ENCODE measurements at regions of chr4 and their contacts with region 1.

Region 1: DNA sequence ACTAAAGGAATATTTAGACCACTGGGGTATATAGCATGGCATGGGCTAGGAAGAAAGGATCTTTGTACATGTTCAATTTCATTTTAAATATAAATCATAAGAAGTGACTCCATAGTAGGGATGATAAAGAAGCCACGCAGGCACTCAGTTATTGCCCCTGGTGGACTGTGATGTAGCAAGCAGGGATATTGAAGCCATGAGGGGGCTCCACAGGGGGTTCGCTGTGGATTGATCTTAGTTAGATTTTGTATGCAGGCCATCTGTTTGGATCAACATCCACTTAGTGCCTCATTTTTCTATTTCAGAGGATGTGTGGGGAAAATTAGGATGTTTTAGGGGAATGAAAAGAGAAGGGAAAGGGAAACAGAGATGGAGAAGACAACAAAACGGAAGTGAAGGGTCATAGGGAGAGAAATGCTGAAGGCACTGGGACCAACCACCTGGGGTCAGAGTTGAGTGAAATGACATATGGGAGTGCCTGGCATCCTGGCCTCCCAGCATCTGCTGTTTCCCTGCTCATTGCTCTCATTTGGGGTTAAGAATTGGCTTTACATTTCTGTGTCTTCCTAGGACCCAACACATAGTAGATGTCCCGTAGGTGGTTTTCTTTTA is 11.2 kb upstream of the FREM3 start:
- DNase-seq: no peak
- H3K4me3 ChIP-seq: no peak overlapping the region
- H3K27ac ChIP-seq: no peak overlapping the region
- H3K4me1 ChIP-seq: no peaks in the 10 kb centered on the region
- H3K27me3 ChIP-seq: no peaks in the 10 kb centered on the region
- CTCF ChIP-seq: no peak

Region 2: DNA sequence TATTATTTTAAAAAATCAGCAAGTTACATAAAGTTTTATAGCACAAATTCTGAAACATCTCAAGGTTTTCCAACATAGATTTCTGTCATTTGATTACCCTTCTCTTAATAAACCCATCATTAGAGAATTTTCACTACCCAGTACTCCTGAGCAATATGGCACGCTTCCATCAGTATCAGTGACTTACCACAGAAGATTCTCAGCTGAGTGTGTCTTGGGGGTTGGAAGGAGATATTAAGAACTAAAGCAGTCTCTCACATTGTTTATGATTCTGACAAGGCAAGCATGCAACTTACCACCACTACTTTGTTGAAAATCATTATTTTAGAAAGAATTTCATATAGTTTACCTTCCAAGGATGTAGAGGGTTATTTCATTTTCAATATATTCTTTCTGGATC is 933.2 kb before region 1 on chr4:
- CTCF ChIA-PET with region 1: no interaction called
- dilution Hi-C with region 1: no loop called
- in situ Hi-C with region 1: no loop called
- intact Hi-C with region 1: no loop called
- DNase-seq: peak; percentile 29
- H3K4me3 ChIP-seq: no peak overlapping the region
- H3K27ac ChIP-seq: no peak overlapping the region
- H3K4me1 ChIP-seq: peaks cover 6% of the 10 kb centered on the region
- H3K27me3 ChIP-seq: no peaks in the 10 kb centered on the region
- CTCF ChIP-seq: no peak

Region 3: GRCh38 chr4:143658336-143658735 is 53.3 kb before region 1 on chr4:
- CTCF ChIA-PET with region 1: no interaction called
- dilution Hi-C with region 1: loop called (anchors 5 kb)
- in situ Hi-C with region 1: no loop called
- intact Hi-C with region 1: no loop called
- DNase-seq: no peak
- H3K4me3 ChIP-seq: no peak overlapping the region
- H3K27ac ChIP-seq: no peak overlapping the region
- H3K4me1 ChIP-seq: no peaks in the 10 kb centered on the region
- H3K27me3 ChIP-seq: no peaks in the 10 kb centered on the region
- CTCF ChIP-seq: no peak

Region 4: DNA sequence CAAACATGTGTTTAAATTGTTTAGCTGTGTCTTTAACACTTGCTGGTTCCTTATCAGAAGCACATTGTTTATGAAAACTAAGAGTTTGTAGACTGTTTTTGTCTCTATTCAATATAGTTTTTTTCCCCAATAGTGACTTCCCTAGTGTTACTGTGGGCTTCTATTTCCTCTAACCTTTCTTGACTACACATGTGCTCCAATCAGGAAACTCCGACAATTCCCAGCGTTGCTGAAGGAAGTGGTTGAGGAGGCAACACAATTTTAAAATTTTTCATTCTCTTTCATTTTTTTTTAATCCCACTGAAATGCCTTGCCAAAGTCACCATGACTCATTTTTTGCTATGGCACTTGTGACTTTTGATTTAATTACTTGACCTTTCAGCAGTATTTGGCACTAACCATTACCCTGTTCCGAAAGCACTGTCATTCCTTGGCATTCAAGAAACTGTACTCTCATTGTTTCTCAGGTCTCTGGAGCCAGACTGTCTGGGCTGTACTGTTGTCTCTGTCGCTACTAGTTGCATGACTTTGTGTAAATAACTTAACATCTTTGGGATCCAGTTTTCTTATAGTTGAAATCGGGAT is 56.5 kb after region 1 on chr4:
- CTCF ChIA-PET with region 1: no interaction called
- dilution Hi-C with region 1: no loop called
- in situ Hi-C with region 1: no loop called
- intact Hi-C with region 1: no loop called
- DNase-seq: peak; percentile 2
- H3K4me3 ChIP-seq: no peak overlapping the region
- H3K27ac ChIP-seq: no peak overlapping the region
- H3K4me1 ChIP-seq: no peaks in the 10 kb centered on the region
- H3K27me3 ChIP-seq: peaks cover 6% of the 10 kb centered on the region
- CTCF ChIP-seq: no peak

Region 5: DNA sequence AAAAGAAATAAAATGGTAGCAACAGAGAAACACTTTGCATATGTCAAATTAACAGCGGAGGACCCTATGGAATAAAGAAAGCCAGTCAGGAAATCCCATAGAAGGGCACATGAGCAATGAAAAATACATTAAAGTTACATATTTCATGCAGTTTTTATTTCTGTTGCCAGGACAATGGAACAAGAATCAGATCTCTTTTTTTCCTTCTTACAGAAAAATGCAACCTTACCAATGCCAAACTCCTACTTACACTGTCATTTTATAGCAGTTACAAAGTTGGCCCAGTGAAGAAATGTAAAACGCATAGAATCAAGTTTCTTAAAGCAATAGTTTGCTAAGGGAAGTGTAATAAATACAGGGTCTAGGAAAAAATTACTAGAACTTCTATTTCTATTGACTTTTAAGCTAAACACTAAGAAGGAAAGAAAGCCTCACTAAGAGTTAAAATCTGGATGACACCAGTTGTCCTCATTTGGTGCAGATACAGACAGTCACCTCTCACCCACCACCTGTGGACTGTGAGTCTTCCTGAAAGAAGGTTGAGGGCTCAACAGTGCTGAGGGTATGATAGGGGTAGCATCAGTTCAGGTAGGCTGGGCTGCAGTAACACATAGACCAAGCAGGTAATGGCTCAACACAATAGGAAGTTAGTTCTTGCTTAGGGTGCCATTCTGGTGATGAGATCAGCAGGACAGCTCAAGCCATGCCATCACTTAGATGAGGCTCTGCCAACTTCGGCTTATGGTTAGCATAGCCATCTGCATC is 1161.8 kb after region 1 on chr4:
- CTCF ChIA-PET with region 1: no interaction called
- dilution Hi-C with region 1: no loop called
- in situ Hi-C with region 1: no loop called
- intact Hi-C with region 1: no loop called
- DNase-seq: no peak
- H3K4me3 ChIP-seq: no peak overlapping the region
- H3K27ac ChIP-seq: no peak overlapping the region
- H3K4me1 ChIP-seq: no peaks in the 10 kb centered on the region
- H3K27me3 ChIP-seq: peaks cover 4% of the 10 kb centered on the region
- CTCF ChIP-seq: no peak

Measured in mammary epithelial cell (primary cell).